ENCODE measurements at regions of chr5 and their contacts with region 1.

Region 1: DNA sequence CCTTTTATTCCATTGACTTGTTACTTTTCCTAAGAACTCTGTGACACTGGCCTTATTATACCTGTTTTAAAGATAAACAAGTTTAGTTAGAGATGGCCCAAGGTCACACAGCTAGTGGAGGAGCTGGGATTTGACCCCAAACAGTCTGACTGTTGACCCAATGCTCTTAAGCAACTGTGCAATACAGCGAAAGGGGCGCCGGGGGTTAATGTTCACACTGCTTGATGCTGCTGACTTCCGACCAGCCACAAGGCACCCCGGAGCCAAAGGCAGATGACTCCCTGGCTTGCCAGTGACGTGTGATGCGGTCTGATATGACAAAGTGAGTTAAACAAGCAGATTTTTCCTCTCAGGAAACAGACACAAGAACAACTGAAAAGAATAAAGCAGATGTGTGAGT is 23.9 kb downstream of the PIK3R1 start:
- DNase-seq: peak; percentile 81 to 84 (median 83)
- H3K4me3 ChIP-seq: no peak overlapping the region
- H3K4me3 Mint-ChIP-seq: peak overlapping the region; percentile 63 to 82
- H3K27ac ChIP-seq: peak overlapping the region; percentile 31 to 83
- H3K27ac Mint-ChIP-seq: peak overlapping the region; percentile 77 to 93 (median 90)
- H3K4me1 ChIP-seq: peaks cover 41 to 58% of the 10 kb centered on the region in 2 donors
- H3K4me1 Mint-ChIP-seq: peaks cover 64% of the 10 kb centered on the region
- H3K27me3 ChIP-seq: no peaks in the 10 kb centered on the region
- H3K27me3 Mint-ChIP-seq: no peaks in the 10 kb centered on the region
- CTCF ChIP-seq: no peak

Region 2: GRCh38 chr5:68196876-68197275 is 42.6 kb before region 1 on chr5:
- intact Hi-C with region 1: loop called (anchors 10 kb)
- DNase-seq: peak; percentile 88 to 95 (median 93)
- H3K4me3 ChIP-seq: no peak overlapping the region
- H3K4me3 Mint-ChIP-seq: peak overlapping the region in 1 of 2 donors; percentile 26
- H3K27ac ChIP-seq: peak overlapping the region in 1 of 2 donors; percentile 80
- H3K27ac Mint-ChIP-seq: peak overlapping the region; percentile 84 to 91 (median 88)
- H3K4me1 ChIP-seq: peaks cover 36 to 37% of the 10 kb centered on the region in 2 donors
- H3K4me1 Mint-ChIP-seq: peaks cover 44% of the 10 kb centered on the region
- H3K27me3 ChIP-seq: no peaks in the 10 kb centered on the region
- H3K27me3 Mint-ChIP-seq: no peaks in the 10 kb centered on the region
- CTCF ChIP-seq: no peak

Region 3: DNA sequence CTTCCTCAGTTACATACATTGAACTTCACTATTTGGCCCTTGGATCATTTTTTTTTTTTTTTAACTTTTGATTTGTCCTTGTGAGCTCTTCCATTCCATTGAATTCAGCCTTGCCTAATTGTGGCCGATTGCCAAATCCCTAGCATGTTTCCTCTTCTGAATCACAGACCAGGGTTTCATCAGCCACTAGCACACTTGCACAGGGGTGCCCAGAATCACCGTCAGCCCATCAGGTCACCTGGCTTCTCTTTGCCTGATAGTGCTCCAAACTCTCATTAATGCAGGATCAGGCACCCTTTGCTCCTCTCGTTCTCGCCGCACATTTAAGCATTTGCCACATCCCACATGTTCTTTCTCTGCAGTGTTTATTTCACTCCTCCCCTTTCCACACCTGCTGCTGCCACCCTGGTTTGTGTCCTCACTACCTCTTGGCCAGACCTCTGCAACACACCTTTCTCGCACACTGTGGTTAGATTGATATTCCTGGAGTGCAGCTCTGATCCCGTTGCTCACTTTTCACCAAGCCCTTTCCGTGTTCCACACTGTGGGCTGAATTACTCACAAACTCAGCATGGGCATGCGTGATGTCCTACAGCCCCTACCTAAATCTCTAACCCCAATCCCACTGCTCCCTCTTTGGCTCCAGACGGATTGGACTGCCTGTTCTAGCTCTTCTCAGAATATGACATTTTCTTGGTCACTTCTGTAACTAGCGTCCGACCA is 14.1 kb before region 1 on chr5:
- intact Hi-C with region 1: loop called in 1 of 2 experiments (anchors 2 kb)
- DNase-seq: peak; percentile 67 to 86 (median 83)
- H3K4me3 ChIP-seq: peak overlapping the region in 1 of 3 experiments; percentile 7
- H3K4me3 Mint-ChIP-seq: peak overlapping the region; percentile 0 to 36
- H3K27ac ChIP-seq: peak overlapping the region in 1 of 2 donors; percentile 65
- H3K27ac Mint-ChIP-seq: peak overlapping the region; percentile 69 to 82 (median 77)
- H3K4me1 ChIP-seq: peaks cover 31 to 36% of the 10 kb centered on the region in 2 donors
- H3K4me1 Mint-ChIP-seq: peaks cover 55% of the 10 kb centered on the region
- H3K27me3 ChIP-seq: no peaks in the 10 kb centered on the region
- H3K27me3 Mint-ChIP-seq: peaks cover 0 to 1% (median 0%) of the 10 kb centered on the region in 3 donors
- CTCF ChIP-seq: no peak

Measured in CD14-positive monocyte (primary cell).